ENCODE measurements at regions of chr9 and their contacts with region 1.

Region 1: GRCh38 chr9:136118320-136119060 is at the start of gene TMEM250:
- DNase-seq: peak; percentile 98
- ATAC-seq: peak; percentile 92
- H3K4me3 Mint-ChIP-seq: peak within 1 kb of the TSS; percentile 77
- H3K27ac Mint-ChIP-seq: peak within 1 kb of the TSS; percentile 83
- H3K4me1 Mint-ChIP-seq: peaks cover 21% of the 10 kb centered on the region
- H3K27me3 Mint-ChIP-seq: no peaks in the 10 kb centered on the region
- total RNA-seq, gene TMEM250: 25.4 to 28.8 TPM

Region 2: DNA sequence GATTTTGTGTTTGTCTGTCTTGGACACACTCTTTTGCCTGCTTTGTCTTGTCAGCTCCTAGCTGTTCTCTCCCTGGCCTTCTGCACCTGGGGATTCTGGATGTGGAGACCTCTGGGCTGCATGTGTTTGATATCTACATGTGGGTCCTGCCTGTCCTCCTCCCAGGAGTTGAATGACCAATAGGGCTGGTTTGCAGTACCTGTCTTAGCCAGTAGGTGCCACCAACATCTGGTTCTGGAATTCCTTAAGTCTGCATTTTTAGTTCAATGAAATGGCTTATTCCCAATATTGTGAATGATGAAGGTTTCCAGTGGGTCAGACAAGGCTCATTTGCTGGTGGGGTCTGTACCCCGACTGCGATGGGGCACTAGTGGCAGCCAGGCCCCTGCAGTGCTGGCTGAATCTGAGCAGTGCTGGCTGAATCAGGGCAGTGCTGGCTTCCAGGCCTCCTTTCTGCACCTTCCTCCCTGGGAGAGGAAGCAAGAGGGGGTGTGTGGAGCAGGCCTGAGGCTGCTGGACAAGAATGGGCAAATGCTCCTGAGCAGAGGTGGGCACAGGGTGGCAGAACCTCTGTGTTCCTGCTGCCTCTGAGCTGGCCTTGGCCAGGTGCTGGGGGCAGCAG is 1718.9 kb before region 1 on chr9:
- CTCF ChIA-PET with region 1: no interaction called
- POLR2A ChIA-PET with region 1: no interaction called
- intact Hi-C with region 1: loop called in 1 of 2 experiments (anchors 10 kb)
- DNase-seq: peak; percentile 48
- ATAC-seq: no peak
- H3K4me3 Mint-ChIP-seq: no peak overlapping the region
- H3K27ac Mint-ChIP-seq: no peak overlapping the region
- H3K4me1 Mint-ChIP-seq: peaks cover 42% of the 10 kb centered on the region
- H3K27me3 Mint-ChIP-seq: no peaks in the 10 kb centered on the region

Region 3: GRCh38 chr9:135602789-135603481 is 515.6 kb before region 1 on chr9:
- CTCF ChIA-PET with region 1: no interaction called
- POLR2A ChIA-PET with region 1: no interaction called
- intact Hi-C with region 1: loop called (anchors 1 to 5 kb)
- DNase-seq: peak; percentile 75
- ATAC-seq: peak; percentile 58
- H3K4me3 Mint-ChIP-seq: no peak overlapping the region
- H3K27ac Mint-ChIP-seq: no peak overlapping the region
- H3K4me1 Mint-ChIP-seq: no peaks in the 10 kb centered on the region
- H3K27me3 Mint-ChIP-seq: peaks cover 10% of the 10 kb centered on the region

Region 4: DNA sequence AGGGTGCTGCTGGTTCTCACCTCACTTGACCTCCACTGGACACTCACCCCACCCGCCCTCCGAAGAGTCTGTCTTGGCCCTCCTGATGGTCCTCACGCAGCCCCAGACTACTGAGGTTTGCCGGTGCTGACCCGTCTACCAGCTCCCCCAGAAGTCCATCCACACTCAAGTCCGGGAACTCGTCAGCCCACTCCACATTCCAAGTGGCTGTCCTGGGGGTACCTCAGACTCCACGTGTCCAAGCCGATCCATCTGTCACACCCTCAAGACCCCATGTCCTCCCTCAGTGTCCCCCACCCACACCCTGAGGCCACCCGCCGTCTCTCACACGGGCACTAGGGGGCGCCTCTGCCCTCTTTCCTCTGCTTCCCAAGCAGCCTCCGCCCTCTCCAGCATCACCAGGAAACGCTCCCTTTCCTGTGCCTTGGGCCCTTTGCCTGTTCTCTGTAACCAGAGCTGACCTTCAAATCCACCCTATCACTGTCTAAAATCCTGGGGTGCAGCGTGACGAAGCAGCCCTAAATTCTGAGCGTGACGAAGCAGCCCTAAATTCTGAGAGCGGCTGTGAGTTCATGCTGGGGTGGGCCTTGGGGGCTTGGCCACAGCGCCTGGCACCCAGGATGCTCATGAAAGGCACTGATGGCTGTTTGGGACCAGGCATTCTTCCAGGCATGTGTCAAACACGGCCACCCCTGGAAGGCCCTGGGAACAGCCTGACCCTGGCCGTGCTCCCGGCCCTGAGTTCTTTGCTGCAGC is 320.8 kb before region 1 on chr9:
- CTCF ChIA-PET with region 1: no interaction called
- POLR2A ChIA-PET with region 1: no interaction called
- intact Hi-C with region 1: loop called (anchors 2 to 10 kb)
- DNase-seq: peak; percentile 57
- ATAC-seq: no peak
- H3K4me3 Mint-ChIP-seq: no peak overlapping the region
- H3K27ac Mint-ChIP-seq: no peak overlapping the region
- H3K4me1 Mint-ChIP-seq: no peaks in the 10 kb centered on the region
- H3K27me3 Mint-ChIP-seq: no peaks in the 10 kb centered on the region

Region 5: GRCh38 chr9:135971892-135972291 is 146.6 kb before region 1 on chr9:
- CTCF ChIA-PET with region 1: interaction called, 11 read pairs
- POLR2A ChIA-PET with region 1: no interaction called
- intact Hi-C with region 1: loop called (anchors 1 kb)
- DNase-seq: peak; percentile 73
- ATAC-seq: peak; percentile 28
- H3K4me3 Mint-ChIP-seq: no peak overlapping the region
- H3K27ac Mint-ChIP-seq: no peak overlapping the region
- H3K4me1 Mint-ChIP-seq: peaks cover 5% of the 10 kb centered on the region
- H3K27me3 Mint-ChIP-seq: no peaks in the 10 kb centered on the region

Region 6: DNA sequence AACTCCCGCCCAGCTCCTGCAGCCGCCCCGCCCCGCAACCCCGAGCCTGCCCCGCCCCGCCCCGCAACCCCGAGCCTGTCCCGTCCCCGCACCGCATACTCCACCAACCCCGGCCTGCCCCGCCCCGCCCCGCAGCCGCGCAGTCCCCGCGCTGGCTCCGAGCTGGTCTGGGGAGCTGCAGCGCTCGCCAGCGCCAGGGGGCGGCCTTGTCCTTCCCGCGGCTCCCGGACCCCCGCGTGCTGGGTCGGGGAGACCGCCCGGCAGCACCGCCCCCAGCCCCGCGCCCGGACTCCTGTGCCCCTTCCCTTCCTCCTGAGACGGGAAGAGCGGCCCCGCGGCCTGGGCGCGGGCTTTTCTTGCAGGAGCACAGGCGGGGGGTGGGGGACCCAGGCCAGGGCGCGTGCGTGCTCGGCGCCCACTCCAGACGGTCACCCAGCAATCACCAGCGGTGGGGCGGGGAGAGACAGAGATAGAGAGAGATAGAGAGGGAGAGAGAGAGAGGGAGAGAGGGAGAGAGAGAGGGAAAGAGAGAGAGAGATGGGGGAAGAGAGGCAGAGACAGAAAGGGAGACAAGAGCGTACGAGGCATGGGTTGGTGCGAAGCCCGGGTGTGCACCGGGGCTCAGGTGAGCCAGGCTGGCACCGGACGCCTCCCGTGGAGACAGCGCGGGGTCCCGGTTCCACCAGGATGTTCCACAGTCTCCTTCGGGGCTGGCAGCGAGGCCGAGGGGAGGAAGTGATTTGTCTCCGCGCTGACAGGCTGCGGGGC is 14.9 kb after region 1 on chr9:
- CTCF ChIA-PET with region 1: no interaction called
- POLR2A ChIA-PET with region 1: no interaction called
- intact Hi-C with region 1: no loop called
- DNase-seq: peak; percentile 57
- ATAC-seq: peak; percentile 83
- H3K4me3 Mint-ChIP-seq: no peak overlapping the region
- H3K27ac Mint-ChIP-seq: no peak overlapping the region
- H3K4me1 Mint-ChIP-seq: peaks cover 3% of the 10 kb centered on the region
- H3K27me3 Mint-ChIP-seq: peaks cover 24% of the 10 kb centered on the region

Region 7: GRCh38 chr9:136245219-136246150 is 127.0 kb after region 1 on chr9 and contains the start of gene QSOX2:
- CTCF ChIA-PET with region 1: no interaction called
- POLR2A ChIA-PET with region 1: no interaction called
- intact Hi-C with region 1: loop called in 1 of 2 experiments (anchors 1 kb)
- DNase-seq: peak; percentile 94
- ATAC-seq: peak; percentile 61
- H3K4me3 Mint-ChIP-seq: peak within 1 kb of the TSS; percentile 85
- H3K27ac Mint-ChIP-seq: peak within 1 kb of the TSS; percentile 95
- H3K4me1 Mint-ChIP-seq: peaks cover 28% of the 10 kb centered on the region
- H3K27me3 Mint-ChIP-seq: no peaks in the 10 kb centered on the region
- total RNA-seq, gene QSOX2: 18.1 to 21.2 TPM

Region 8: DNA sequence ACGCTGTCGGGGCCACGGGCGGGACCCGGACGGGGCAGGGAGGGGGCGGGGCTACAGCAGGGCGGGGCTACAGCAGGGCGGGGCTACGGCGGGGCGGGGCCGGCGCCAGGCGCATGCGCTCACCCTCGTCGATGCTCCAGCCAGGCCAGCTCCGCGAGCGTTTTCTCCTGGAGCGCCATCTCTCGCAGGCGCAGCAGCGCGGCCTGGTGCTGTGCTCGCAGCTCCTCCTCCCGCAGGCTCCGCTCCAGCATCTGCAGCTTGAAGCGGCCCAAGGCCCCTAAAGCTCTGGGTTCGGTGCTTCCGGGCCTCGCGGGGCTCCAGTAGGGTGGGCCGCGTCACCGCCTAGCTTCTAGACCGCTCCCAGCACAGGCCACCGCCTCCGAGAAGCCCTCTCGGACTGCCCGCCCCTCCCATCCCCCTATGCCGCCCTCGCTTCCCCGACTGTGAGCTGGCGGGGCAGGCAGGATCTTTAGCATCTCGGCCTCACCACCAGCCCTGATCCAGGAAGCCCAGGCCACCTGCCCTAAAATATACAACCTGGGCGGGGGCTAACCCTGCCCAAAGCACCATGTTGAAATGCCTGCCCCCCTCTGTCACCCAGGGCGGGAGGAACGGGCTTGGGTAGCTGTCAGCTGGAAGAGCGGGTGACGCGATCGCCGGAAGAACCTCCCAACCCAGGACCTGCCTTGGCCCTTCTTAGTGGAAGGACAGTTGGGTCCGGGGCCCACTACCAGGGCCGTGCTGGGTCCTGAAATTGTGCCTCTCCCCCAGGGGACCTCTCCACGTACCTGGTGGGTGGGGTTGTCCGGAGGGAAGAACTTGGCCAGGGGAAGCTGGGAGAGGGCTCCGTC is 149.0 kb after region 1 on chr9:
- CTCF ChIA-PET with region 1: no interaction called
- POLR2A ChIA-PET with region 1: no interaction called
- intact Hi-C with region 1: no loop called
- DNase-seq: peak; percentile 92
- ATAC-seq: peak; percentile 99
- H3K4me3 Mint-ChIP-seq: peak overlapping the region; percentile 69
- H3K27ac Mint-ChIP-seq: peak overlapping the region; percentile 58
- H3K4me1 Mint-ChIP-seq: peaks cover 6% of the 10 kb centered on the region
- H3K27me3 Mint-ChIP-seq: no peaks in the 10 kb centered on the region

Region 9: GRCh38 chr9:136807281-136808074 is 689.0 kb after region 1 on chr9 and contains the start of gene RABL6:
- CTCF ChIA-PET with region 1: no interaction called
- POLR2A ChIA-PET with region 1: no interaction called
- intact Hi-C with region 1: loop called in 1 of 2 experiments (anchors 10 kb)
- DNase-seq: peak; percentile 86
- ATAC-seq: peak; percentile 88
- H3K4me3 Mint-ChIP-seq: peak within 1 kb of the TSS; percentile 81
- H3K27ac Mint-ChIP-seq: peak within 1 kb of the TSS; percentile 88
- H3K4me1 Mint-ChIP-seq: peaks cover 33% of the 10 kb centered on the region
- H3K27me3 Mint-ChIP-seq: no peaks in the 10 kb centered on the region
- total RNA-seq, gene RABL6: 66.2 to 71.8 TPM